MCF 10A (cell line): ENCODE measurements at regions of chr1 and their contacts with region 1.

Region 1: GRCh38 chr1:37682334-37682987 is 9.9 kb upstream of the CDCA8 start:
- DNase-seq: peak; percentile 76
- H3K4me3 Mint-ChIP-seq: no peak overlapping the region
- H3K27ac Mint-ChIP-seq: no peak overlapping the region
- H3K4me1 Mint-ChIP-seq: peaks cover 11% of the 10 kb centered on the region
- H3K27me3 Mint-ChIP-seq: no peaks in the 10 kb centered on the region
- CTCF ChIP-seq: peak; percentile 91

Region 2: GRCh38 chr1:36516372-36517325 is 1165.8 kb before region 1 on chr1:
- CTCF ChIA-PET with region 1: interaction called, 5 read pairs
- POLR2A ChIA-PET with region 1: no interaction called
- intact Hi-C with region 1: loop called (anchors 1 kb)
- DNase-seq: peak; percentile 73
- H3K4me3 Mint-ChIP-seq: no peak overlapping the region
- H3K27ac Mint-ChIP-seq: no peak overlapping the region
- H3K4me1 Mint-ChIP-seq: peaks cover 7% of the 10 kb centered on the region
- H3K27me3 Mint-ChIP-seq: no peaks in the 10 kb centered on the region
- CTCF ChIP-seq: peak; percentile 90

Region 3: GRCh38 chr1:36703526-36704208 is 978.8 kb before region 1 on chr1:
- CTCF ChIA-PET with region 1: no interaction called
- POLR2A ChIA-PET with region 1: no interaction called
- intact Hi-C with region 1: loop called (anchors 10 kb)
- DNase-seq: peak; percentile 69
- H3K4me3 Mint-ChIP-seq: no peak overlapping the region
- H3K27ac Mint-ChIP-seq: no peak overlapping the region
- H3K4me1 Mint-ChIP-seq: no peaks in the 10 kb centered on the region
- H3K27me3 Mint-ChIP-seq: peaks cover 60% of the 10 kb centered on the region
- CTCF ChIP-seq: peak; percentile 94

Region 4: DNA sequence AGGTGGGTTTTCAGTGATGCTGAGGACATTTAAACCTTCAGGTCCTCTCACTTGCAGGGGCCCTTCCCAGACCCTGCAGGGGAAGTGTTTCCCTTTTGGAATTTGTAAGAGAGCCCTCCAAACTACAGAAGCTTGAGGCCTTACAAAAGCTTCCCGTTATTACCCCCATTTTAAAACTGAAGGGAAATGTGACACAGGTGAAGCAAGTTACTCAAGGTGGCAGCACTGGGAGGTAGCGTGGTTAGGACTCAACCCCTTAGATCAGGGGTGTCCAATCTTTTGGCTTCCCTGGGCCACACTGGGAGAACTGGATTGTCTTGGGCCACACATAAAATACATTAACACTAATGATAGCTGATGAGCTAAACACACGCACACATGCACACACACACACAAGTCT is 223.9 kb before region 1 on chr1:
- CTCF ChIA-PET with region 1: interaction called, 37 read pairs
- POLR2A ChIA-PET with region 1: interaction called, 3 read pairs
- intact Hi-C with region 1: loop called (anchors 1 kb)
- DNase-seq: no peak
- H3K4me3 Mint-ChIP-seq: no peak overlapping the region
- H3K27ac Mint-ChIP-seq: no peak overlapping the region
- H3K4me1 Mint-ChIP-seq: peaks cover 9% of the 10 kb centered on the region
- H3K27me3 Mint-ChIP-seq: no peaks in the 10 kb centered on the region
- CTCF ChIP-seq: no peak

Region 5: GRCh38 chr1:37561133-37562132 is 121.0 kb before region 1 on chr1:
- CTCF ChIA-PET with region 1: interaction called, 5 read pairs
- POLR2A ChIA-PET with region 1: no interaction called
- intact Hi-C with region 1: loop called (anchors 1 kb)
- DNase-seq: peak; percentile 44
- H3K4me3 Mint-ChIP-seq: no peak overlapping the region
- H3K27ac Mint-ChIP-seq: no peak overlapping the region
- H3K4me1 Mint-ChIP-seq: no peaks in the 10 kb centered on the region
- H3K27me3 Mint-ChIP-seq: no peaks in the 10 kb centered on the region
- CTCF ChIP-seq: peak; percentile 45

Region 6: DNA sequence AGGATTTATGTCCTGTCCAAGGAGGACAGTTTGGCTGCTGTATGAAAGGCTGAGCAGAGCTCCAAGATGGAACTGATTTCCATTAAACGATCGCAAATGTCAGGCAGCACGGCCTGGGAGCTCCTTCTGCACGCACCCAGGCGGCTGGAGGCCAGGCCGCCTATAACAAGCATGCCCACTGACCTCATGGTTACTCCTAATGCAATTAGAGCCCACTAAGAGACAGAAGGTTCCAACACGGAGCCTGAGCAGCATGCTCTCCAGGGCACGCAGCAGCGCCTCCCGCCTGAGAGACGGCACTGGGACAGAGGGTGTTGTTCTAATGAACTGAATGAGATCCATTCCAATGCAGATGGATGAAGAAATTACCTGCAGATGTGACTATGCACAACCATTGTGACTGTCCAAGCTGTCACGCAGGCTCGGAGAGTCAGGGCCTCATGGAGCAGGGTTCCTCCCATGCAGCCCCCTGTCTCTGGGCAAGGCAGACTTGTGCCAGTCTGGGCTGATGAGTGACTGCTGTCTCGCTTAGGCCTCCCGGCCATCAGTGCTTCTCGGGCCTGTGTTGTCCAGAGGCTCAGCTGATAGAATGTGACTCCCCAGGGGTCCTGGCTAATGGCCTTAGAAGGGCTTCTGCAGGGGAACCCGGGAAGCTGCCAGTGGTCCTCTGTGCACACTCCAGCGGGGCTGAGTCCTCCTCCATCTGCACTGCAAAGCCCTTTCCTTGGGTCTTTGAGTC is 15.3 kb before region 1 on chr1:
- CTCF ChIA-PET with region 1: interaction called, 18 read pairs
- POLR2A ChIA-PET with region 1: no interaction called
- intact Hi-C with region 1: no loop called
- DNase-seq: no peak
- H3K4me3 Mint-ChIP-seq: no peak overlapping the region
- H3K27ac Mint-ChIP-seq: no peak overlapping the region
- H3K4me1 Mint-ChIP-seq: no peaks in the 10 kb centered on the region
- H3K27me3 Mint-ChIP-seq: peaks cover 12% of the 10 kb centered on the region
- CTCF ChIP-seq: no peak

Region 7: DNA sequence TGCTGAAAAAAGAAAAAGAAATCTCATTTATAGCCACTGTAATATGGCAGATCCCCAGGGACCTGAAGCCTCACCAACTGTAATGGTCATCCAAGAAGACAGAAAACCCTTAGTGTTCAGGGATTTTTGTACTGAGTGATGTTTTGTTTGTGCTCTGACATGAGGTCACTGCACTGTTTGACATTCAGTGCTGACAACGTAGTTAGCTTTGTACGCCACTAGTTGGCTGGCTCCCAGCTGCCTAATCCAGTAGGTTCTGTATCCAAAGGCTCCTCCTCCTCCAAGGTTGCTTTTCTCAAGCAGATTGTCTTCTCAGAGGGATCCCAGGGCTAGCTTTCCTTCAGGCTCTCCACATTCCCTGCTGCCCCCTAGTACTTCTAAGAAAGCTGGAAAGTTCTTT is 135.0 kb after region 1 on chr1:
- CTCF ChIA-PET with region 1: no interaction called
- POLR2A ChIA-PET with region 1: no interaction called
- intact Hi-C with region 1: no loop called
- DNase-seq: no peak
- H3K4me3 Mint-ChIP-seq: no peak overlapping the region
- H3K27ac Mint-ChIP-seq: no peak overlapping the region
- H3K4me1 Mint-ChIP-seq: no peaks in the 10 kb centered on the region
- H3K27me3 Mint-ChIP-seq: no peaks in the 10 kb centered on the region
- CTCF ChIP-seq: no peak